ENCODE measurements at regions of chr10 and their contacts with region 1.

Region 1: DNA sequence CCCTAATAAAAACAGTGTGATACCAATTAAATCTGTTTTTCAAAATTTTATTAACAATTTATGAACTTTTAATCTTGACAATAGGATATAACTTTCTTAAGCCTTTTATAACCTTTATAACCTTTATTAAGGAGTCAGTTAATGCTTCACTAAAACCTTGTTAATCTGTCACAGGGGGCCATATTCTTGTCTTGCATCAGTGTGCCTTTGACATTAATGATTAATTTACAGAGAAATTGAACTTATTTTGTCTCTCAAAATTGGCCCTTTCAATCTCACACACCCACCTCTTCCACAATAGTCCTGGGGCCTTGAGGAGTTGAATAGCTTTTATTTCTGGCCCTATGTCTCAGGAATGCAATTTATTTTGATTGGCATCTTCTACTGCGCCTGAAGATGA is 68.5 kb downstream of the AKR1C4 start:
- DNase-seq: no peak
- ATAC-seq: no peak
- H3K4me3 ChIP-seq: no peak overlapping the region
- H3K4me3 Mint-ChIP-seq: no peak overlapping the region
- H3K27ac ChIP-seq: no peak overlapping the region
- H3K27ac Mint-ChIP-seq: no peak overlapping the region
- H3K4me1 ChIP-seq: no peaks in the 10 kb centered on the region
- H3K4me1 Mint-ChIP-seq: no peaks in the 10 kb centered on the region
- H3K27me3 ChIP-seq: no peaks in the 10 kb centered on the region
- H3K27me3 Mint-ChIP-seq: peaks cover 2% of the 10 kb centered on the region
- CTCF ChIP-seq: no peak

Region 2: DNA sequence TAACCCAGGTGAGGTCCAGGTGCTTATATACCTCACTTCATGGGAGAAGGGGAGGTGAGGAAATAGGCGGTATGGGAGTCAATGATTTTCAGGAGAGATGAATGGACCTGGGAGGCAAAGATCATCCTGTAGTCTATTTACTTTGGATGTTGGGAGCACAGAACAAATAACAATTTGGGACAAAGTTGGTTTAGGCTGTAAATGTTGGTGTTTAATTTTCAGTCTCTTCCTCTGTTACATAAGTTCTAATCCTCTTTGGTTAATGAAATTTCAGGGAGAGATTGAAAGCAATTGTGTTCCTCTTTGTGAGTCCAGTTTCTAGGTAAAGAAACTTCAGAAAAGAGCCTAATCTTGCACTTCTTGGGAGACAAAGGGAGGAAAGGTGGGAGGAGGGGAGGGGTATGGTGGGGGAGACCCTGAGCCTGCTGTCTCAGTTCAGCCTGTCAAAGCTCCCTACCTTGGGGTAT is 21.6 kb before region 1 on chr10:
- CTCF ChIA-PET with region 1: no interaction called
- POLR2A ChIA-PET with region 1: no interaction called
- intact Hi-C with region 1: no loop called
- DNase-seq: no peak
- ATAC-seq: no peak
- H3K4me3 ChIP-seq: no peak overlapping the region
- H3K4me3 Mint-ChIP-seq: no peak overlapping the region
- H3K27ac ChIP-seq: no peak overlapping the region
- H3K27ac Mint-ChIP-seq: no peak overlapping the region
- H3K4me1 ChIP-seq: no peaks in the 10 kb centered on the region
- H3K4me1 Mint-ChIP-seq: no peaks in the 10 kb centered on the region
- H3K27me3 ChIP-seq: no peaks in the 10 kb centered on the region
- H3K27me3 Mint-ChIP-seq: no peaks in the 10 kb centered on the region
- CTCF ChIP-seq: no peak

Region 3: GRCh38 chr10:6254201-6254600 is 989.1 kb after region 1 on chr10:
- CTCF ChIA-PET with region 1: no interaction called
- POLR2A ChIA-PET with region 1: no interaction called
- intact Hi-C with region 1: loop called in 1 of 2 experiments (anchors 10 kb)
- DNase-seq: no peak
- ATAC-seq: no peak
- H3K4me3 ChIP-seq: no peak overlapping the region
- H3K4me3 Mint-ChIP-seq: no peak overlapping the region
- H3K27ac ChIP-seq: no peak overlapping the region
- H3K27ac Mint-ChIP-seq: no peak overlapping the region
- H3K4me1 ChIP-seq: no peaks in the 10 kb centered on the region
- H3K4me1 Mint-ChIP-seq: no peaks in the 10 kb centered on the region
- H3K27me3 ChIP-seq: no peaks in the 10 kb centered on the region
- H3K27me3 Mint-ChIP-seq: no peaks in the 10 kb centered on the region
- CTCF ChIP-seq: no peak

Measured in CD8-positive, alpha-beta T cell (primary cell).